Esophagus muscularis mucosa (tissue), 4 donors: ENCODE measurements at regions of chr7 and their contacts with region 1.

Region 1: GRCh38 chr7:95545078-95545498 is 51.2 kb downstream of the PDK4 start:
- DNase-seq: no peak
- H3K4me3 ChIP-seq: peak overlapping the region; percentile 33 to 45 (median 44)
- H3K27ac ChIP-seq: peak overlapping the region; percentile 75 to 93 (median 90)
- H3K4me1 ChIP-seq: peaks cover 51 to 57% (median 57%) of the 10 kb centered on the region in 4 donors
- H3K27me3 ChIP-seq: no peaks in the 10 kb centered on the region
- CTCF ChIP-seq: peak; percentile 74 to 80 (median 74)
- EP300 ChIP-seq: no peak
- POLR2A ChIP-seq: no peak

Region 2: GRCh38 chr7:95596198-95597063 is 51.3 kb after region 1 on chr7 and contains the start of gene PDK4:
- intact Hi-C with region 1: loop called (anchors 2 kb)
- DNase-seq: peak; percentile 99
- H3K4me3 ChIP-seq: peak within 1 kb of the TSS; percentile 80 to 97 (median 88)
- H3K27ac ChIP-seq: peak within 1 kb of the TSS; percentile 93 to 99 (median 96)
- H3K4me1 ChIP-seq: peaks cover 22 to 46% (median 31%) of the 10 kb centered on the region in 4 donors
- H3K27me3 ChIP-seq: no peaks in the 10 kb centered on the region
- CTCF ChIP-seq: no peak
- EP300 ChIP-seq: peak; percentile 60
- POLR2A ChIP-seq: peak; percentile 83
- total RNA-seq, gene PDK4: 165 to 1,138 (median 371) TPM

Region 3: DNA sequence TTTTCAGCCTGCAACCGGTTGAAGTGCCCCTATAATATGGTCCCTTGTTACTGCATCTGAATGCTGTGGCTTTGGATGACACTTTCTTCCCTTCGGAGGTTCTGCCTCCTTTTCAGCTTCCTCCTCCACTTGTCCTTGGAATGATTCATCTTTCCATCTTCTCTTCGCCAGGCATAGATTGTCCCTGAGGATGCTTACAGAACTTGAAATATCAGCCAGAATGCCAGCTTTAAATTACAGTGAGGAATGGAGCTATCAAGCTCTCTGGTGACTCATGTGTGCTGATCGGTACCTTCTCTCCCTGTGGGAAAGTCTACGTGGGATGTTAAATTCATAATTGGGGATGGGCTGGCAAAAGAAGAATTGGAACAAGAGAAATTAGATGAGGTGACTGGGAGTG is 97.1 kb after region 1 on chr7:
- intact Hi-C with region 1: no loop called
- DNase-seq: no peak
- H3K4me3 ChIP-seq: no peak overlapping the region
- H3K27ac ChIP-seq: no peak overlapping the region
- H3K4me1 ChIP-seq: no peaks in the 10 kb centered on the region
- H3K27me3 ChIP-seq: no peaks in the 10 kb centered on the region
- CTCF ChIP-seq: no peak
- EP300 ChIP-seq: no peak
- POLR2A ChIP-seq: no peak